CD4-positive, alpha-beta T cell (primary cell): ENCODE measurements at regions of chr10 and their contacts with region 1.

Region 1: DNA sequence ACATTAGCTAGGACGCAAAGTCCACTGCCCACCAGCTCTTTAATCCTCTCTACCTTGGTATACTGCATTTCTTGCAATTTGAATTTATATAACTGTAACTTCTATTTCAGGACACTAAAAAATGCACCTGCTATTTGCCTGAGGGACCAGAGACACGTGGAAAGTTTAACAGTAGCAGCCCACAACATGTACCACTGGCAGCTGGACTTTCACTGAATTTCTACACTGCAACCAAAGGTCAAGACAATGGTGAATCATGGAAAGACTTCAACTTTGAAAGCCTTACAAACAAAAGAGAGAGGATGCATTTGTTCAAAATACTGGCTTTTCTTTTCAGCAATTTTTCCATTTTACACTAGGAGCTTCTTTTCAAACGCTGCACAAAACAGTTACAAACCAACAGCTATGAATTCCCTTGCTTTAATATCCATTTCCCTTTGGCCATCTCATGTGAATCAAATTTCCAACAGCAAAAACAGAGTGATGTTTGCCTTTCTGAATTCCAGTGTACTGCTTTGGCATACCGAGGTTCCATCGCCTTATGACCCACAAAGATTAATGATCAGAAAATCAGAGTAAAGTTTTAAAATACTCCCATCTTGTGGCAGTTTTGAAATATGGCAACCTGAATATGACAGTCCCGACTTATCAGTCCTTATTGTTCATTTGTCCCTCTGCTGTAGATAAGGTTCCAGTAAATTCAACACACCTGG is 29.9 kb upstream of the HNRNPH3 start:
- DNase-seq: peak in 3 of 14 experiments; percentile 44 to 50 (median 45)
- ATAC-seq: peak; percentile 63
- H3K4me3 ChIP-seq: no peak overlapping the region
- H3K4me3 Mint-ChIP-seq: no peak overlapping the region
- H3K27ac ChIP-seq: no peak overlapping the region
- H3K27ac Mint-ChIP-seq: no peak overlapping the region
- H3K4me1 ChIP-seq: no peaks in the 10 kb centered on the region
- H3K4me1 Mint-ChIP-seq: no peaks in the 10 kb centered on the region
- H3K27me3 ChIP-seq: no peaks in the 10 kb centered on the region
- H3K27me3 Mint-ChIP-seq: no peaks in the 10 kb centered on the region
- CTCF ChIP-seq: peak; percentile 54

Region 2: DNA sequence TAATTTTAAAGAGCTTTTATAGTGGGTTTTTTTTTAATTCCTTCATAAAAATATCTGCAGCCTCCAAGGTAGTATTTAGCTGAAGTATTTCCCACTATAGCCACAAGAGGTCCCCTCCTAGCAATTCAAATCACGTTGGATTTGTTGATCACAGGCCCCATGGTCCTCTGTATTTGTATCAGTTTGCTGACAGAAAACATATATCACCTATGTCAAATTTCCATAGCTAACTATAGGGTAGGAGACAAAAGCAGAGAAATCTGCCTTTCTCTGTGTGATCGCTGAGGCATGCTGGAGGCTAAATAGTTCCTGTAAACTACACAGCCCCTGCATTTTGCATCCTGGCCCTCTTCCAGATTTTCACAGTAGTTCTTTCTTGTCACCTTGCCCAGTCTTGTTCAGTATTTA is 604.2 kb before region 1 on chr10:
- CTCF ChIA-PET with region 1: no interaction called
- POLR2A ChIA-PET with region 1: no interaction called
- intact Hi-C with region 1: loop called in 1 of 2 experiments (anchors 10 kb)
- DNase-seq: peak in 9 of 14 experiments; percentile 2 to 75 (median 10)
- ATAC-seq: peak; percentile 90
- H3K4me3 ChIP-seq: no peak overlapping the region
- H3K4me3 Mint-ChIP-seq: no peak overlapping the region
- H3K27ac ChIP-seq: no peak overlapping the region
- H3K27ac Mint-ChIP-seq: no peak overlapping the region
- H3K4me1 ChIP-seq: peaks cover 6% of the 10 kb centered on the region
- H3K4me1 Mint-ChIP-seq: peaks cover 15% of the 10 kb centered on the region
- H3K27me3 ChIP-seq: no peaks in the 10 kb centered on the region
- H3K27me3 Mint-ChIP-seq: peaks cover 39% of the 10 kb centered on the region
- CTCF ChIP-seq: peak; percentile 73

Region 3: DNA sequence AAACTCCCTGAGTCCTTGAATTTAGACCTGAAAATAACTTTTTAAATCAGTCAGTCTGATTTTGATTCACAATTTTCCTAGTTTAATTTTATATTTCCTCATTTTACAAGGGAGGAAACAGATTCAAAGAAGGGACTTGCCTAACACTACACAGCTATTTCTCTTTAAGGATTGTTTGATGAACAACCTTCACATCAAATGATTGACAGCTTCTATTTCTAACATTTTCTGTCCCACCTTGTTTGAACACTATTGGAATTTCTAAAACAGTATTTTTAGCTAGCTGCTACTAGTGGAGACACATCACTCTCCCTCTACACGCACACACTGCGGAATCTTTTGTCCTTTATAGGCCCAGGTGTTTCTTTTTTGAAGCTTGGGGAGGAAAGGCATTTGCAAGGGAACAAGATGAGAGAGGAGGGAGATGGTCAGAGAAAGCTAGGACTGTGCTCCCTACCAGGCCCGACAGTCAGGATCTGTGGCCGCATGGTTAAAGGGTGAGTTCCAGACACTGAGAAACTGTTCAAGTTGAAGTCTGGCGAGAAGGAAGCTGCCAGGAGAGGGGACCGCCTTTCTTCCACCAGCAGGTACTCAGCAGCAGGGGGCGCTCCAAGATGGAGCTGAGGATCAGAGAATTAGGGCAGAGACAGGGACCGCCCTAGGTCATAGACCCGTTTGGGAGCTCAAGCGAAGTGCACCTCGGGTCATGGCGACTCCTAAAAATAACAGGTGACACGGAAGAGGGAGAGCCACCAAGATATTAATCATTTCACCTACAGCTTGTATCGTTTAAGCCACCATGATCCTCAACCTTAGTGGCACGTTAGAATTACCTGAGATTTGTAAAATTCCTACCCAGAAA is 513.7 kb before region 1 on chr10:
- CTCF ChIA-PET with region 1: interaction called, 5 read pairs
- POLR2A ChIA-PET with region 1: no interaction called
- intact Hi-C with region 1: loop called in 1 of 2 experiments (anchors 2 kb)
- DNase-seq: peak; percentile 52 to 79 (median 62)
- ATAC-seq: peak; percentile 73
- H3K4me3 ChIP-seq: no peak overlapping the region
- H3K4me3 Mint-ChIP-seq: no peak overlapping the region
- H3K27ac ChIP-seq: no peak overlapping the region
- H3K27ac Mint-ChIP-seq: no peak overlapping the region
- H3K4me1 ChIP-seq: peaks cover 30% of the 10 kb centered on the region
- H3K4me1 Mint-ChIP-seq: peaks cover 30% of the 10 kb centered on the region
- H3K27me3 ChIP-seq: no peaks in the 10 kb centered on the region
- H3K27me3 Mint-ChIP-seq: no peaks in the 10 kb centered on the region
- CTCF ChIP-seq: peak; percentile 57

Region 4: GRCh38 chr10:67849331-67850011 is 452.5 kb before region 1 on chr10:
- CTCF ChIA-PET with region 1: no interaction called
- POLR2A ChIA-PET with region 1: no interaction called
- intact Hi-C with region 1: loop called in 1 of 2 experiments (anchors 2 kb)
- DNase-seq: peak; percentile 87 to 96 (median 93)
- ATAC-seq: peak; percentile 99
- H3K4me3 ChIP-seq: peak overlapping the region; percentile 91
- H3K4me3 Mint-ChIP-seq: peak overlapping the region; percentile 94
- H3K27ac ChIP-seq: peak overlapping the region; percentile 78 to 93
- H3K27ac Mint-ChIP-seq: peak overlapping the region; percentile 91
- H3K4me1 ChIP-seq: peaks cover 12% of the 10 kb centered on the region
- H3K4me1 Mint-ChIP-seq: peaks cover 9% of the 10 kb centered on the region
- H3K27me3 ChIP-seq: no peaks in the 10 kb centered on the region
- H3K27me3 Mint-ChIP-seq: no peaks in the 10 kb centered on the region
- CTCF ChIP-seq: no peak

Region 5: DNA sequence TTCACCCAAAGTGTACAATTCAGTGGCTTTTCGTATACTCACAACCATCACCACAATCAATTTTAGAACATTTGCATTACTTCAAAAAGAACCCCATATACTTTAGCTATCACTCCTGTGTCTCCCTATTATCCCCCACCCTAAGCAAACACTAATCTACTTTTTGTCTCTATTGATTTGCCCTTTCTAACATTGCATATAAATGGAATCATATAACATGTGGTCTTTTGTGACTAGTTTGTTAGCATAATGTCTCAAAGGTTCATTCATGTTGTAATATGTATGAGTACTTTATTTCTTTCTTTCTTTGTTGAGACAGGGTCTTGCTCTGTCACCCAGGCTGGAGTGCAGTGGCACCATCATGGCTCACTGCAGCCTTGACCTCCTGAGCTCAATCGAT is 443.0 kb before region 1 on chr10:
- CTCF ChIA-PET with region 1: no interaction called
- POLR2A ChIA-PET with region 1: no interaction called
- intact Hi-C with region 1: loop called (anchors 2 to 5 kb)
- DNase-seq: no peak
- ATAC-seq: no peak
- H3K4me3 ChIP-seq: no peak overlapping the region
- H3K4me3 Mint-ChIP-seq: no peak overlapping the region
- H3K27ac ChIP-seq: no peak overlapping the region
- H3K27ac Mint-ChIP-seq: no peak overlapping the region
- H3K4me1 ChIP-seq: peaks cover 2% of the 10 kb centered on the region
- H3K4me1 Mint-ChIP-seq: peaks cover 5% of the 10 kb centered on the region
- H3K27me3 ChIP-seq: no peaks in the 10 kb centered on the region
- H3K27me3 Mint-ChIP-seq: no peaks in the 10 kb centered on the region
- CTCF ChIP-seq: no peak

Region 6: GRCh38 chr10:68208424-68209042 is 93.4 kb before region 1 on chr10:
- CTCF ChIA-PET with region 1: no interaction called
- POLR2A ChIA-PET with region 1: no interaction called
- intact Hi-C with region 1: loop called in 1 of 2 experiments (anchors 5 kb)
- DNase-seq: peak in 2 of 14 experiments; percentile 11 to 22
- ATAC-seq: no peak
- H3K4me3 ChIP-seq: no peak overlapping the region
- H3K4me3 Mint-ChIP-seq: no peak overlapping the region
- H3K27ac ChIP-seq: no peak overlapping the region
- H3K27ac Mint-ChIP-seq: no peak overlapping the region
- H3K4me1 ChIP-seq: no peaks in the 10 kb centered on the region
- H3K4me1 Mint-ChIP-seq: no peaks in the 10 kb centered on the region
- H3K27me3 ChIP-seq: peaks cover 0 to 9% of the 10 kb centered on the region in 2 experiments
- H3K27me3 Mint-ChIP-seq: peaks cover 25% of the 10 kb centered on the region
- CTCF ChIP-seq: no peak

Region 7: DNA sequence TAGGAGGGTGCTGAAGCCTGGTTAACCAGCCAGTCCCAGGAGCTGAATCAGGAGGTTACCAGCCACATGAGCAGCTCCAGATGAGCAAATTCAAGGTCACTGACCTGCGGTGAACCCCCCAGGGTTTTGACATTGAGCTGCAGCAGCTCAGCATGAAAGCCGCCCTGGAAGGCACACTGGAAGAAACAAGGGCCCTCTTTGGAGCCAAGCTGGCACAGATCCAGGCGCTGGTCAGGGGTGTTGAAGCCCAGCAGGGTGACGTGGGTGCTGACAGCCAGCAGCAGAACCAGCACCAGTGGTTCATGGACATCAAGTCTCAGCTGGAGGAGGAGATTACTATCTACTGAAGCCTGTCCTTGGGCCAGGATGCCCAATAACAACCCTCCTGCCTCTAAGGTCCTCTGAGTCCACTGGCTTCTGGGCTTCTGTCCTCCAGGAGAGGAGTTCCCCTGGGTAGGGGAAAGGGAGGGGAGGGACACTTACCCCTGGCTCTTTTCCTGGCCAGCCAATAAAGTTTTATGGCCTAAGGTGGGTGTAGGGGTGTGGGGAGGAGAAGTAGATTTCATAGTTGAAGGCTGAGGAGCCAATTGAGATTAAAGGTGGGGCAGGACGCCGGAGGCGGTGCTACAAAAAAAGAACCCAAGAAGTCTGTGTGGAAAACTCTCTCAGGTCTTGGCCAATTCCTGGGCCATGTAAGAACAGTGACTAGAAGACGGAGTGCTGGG is 40.7 kb before region 1 on chr10:
- CTCF ChIA-PET with region 1: no interaction called
- POLR2A ChIA-PET with region 1: no interaction called
- intact Hi-C with region 1: no loop called
- DNase-seq: no peak
- ATAC-seq: no peak
- H3K4me3 ChIP-seq: no peak overlapping the region
- H3K4me3 Mint-ChIP-seq: no peak overlapping the region
- H3K27ac ChIP-seq: no peak overlapping the region
- H3K27ac Mint-ChIP-seq: no peak overlapping the region
- H3K4me1 ChIP-seq: no peaks in the 10 kb centered on the region
- H3K4me1 Mint-ChIP-seq: no peaks in the 10 kb centered on the region
- H3K27me3 ChIP-seq: no peaks in the 10 kb centered on the region
- H3K27me3 Mint-ChIP-seq: no peaks in the 10 kb centered on the region
- CTCF ChIP-seq: no peak

Region 8: DNA sequence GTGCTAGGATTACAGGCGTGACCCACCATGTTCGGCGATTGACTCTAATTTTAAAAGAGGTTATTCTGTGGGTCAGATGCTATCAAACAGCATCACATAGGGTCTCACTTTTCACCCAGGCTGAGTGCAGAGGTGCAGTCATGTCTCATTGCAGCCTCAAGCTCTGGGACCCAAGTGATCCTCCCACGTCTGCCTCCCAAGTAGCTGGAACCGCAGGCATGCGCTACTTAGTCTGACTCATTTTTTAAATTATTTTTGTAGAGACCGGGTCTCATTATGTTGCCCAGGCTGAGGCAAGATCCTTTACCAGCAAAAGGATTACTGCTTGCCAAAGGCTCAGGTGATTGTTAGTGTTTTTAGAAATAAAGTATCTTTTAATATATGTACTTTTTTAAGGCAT is 482.5 kb after region 1 on chr10:
- CTCF ChIA-PET with region 1: no interaction called
- POLR2A ChIA-PET with region 1: no interaction called
- intact Hi-C with region 1: no loop called
- DNase-seq: no peak
- ATAC-seq: no peak
- H3K4me3 ChIP-seq: no peak overlapping the region
- H3K4me3 Mint-ChIP-seq: no peak overlapping the region
- H3K27ac ChIP-seq: no peak overlapping the region
- H3K27ac Mint-ChIP-seq: no peak overlapping the region
- H3K4me1 ChIP-seq: no peaks in the 10 kb centered on the region
- H3K4me1 Mint-ChIP-seq: no peaks in the 10 kb centered on the region
- H3K27me3 ChIP-seq: no peaks in the 10 kb centered on the region
- H3K27me3 Mint-ChIP-seq: no peaks in the 10 kb centered on the region
- CTCF ChIP-seq: no peak